Endothelial cell of umbilical vein (primary cell): ENCODE measurements at regions of chr1 and their contacts with region 1.

Region 1: DNA sequence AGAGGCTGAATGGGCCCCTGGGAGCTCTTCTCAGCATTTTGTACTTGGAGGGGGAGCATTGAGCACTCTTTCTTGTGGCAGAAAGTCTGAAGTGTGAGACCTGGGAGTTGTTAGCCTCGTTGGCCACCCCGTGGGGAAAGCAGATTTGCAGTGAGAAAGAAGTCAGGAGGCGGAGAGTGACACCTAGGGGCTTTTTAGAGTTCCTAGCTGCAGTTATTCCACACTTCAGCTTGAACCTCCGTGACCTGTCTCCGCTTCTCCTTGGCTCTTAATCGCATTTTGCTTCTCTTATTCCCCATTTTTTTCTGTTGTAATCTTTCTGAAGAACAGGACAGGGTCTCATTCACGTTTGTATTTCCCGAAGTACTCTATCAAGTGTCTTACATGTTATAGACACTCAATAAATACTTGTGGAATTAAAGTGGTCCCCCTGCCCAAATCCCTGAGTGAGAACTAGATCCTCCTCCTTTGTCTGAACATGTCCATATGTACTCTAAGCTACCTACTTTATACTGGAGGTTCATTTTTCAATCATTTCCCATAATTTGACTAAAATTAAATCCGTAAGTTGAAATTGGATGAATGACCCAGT is 14.5 kb upstream of the C1orf141 start:
- DNase-seq: peak; percentile 74
- H3K4me3 ChIP-seq: no peak overlapping the region
- H3K27ac ChIP-seq: no peak overlapping the region
- H3K4me1 ChIP-seq: no peaks in the 10 kb centered on the region
- H3K27me3 ChIP-seq: peaks cover 0 to 5% of the 10 kb centered on the region in 2 experiments
- CTCF ChIP-seq: peak; percentile 56 to 81
- POLR2A ChIP-seq: no peak

Region 2: GRCh38 chr1:66452162-66452561 is 697.1 kb before region 1 on chr1:
- CTCF ChIA-PET with region 1: no interaction called
- POLR2A ChIA-PET with region 1: no interaction called
- dilution Hi-C with region 1: no loop called
- intact Hi-C with region 1: loop called (anchors 10 kb)
- DNase-seq: peak; percentile 33
- H3K4me3 ChIP-seq: no peak overlapping the region
- H3K27ac ChIP-seq: no peak overlapping the region
- H3K4me1 ChIP-seq: no peaks in the 10 kb centered on the region
- H3K27me3 ChIP-seq: no peaks in the 10 kb centered on the region
- CTCF ChIP-seq: peak; percentile 22 to 25
- POLR2A ChIP-seq: no peak

Region 3: GRCh38 chr1:66890621-66891020 is 258.7 kb before region 1 on chr1:
- CTCF ChIA-PET with region 1: no interaction called
- POLR2A ChIA-PET with region 1: no interaction called
- dilution Hi-C with region 1: no loop called
- intact Hi-C with region 1: no loop called
- DNase-seq: no peak
- H3K4me3 ChIP-seq: no peak overlapping the region
- H3K27ac ChIP-seq: no peak overlapping the region
- H3K4me1 ChIP-seq: no peaks in the 10 kb centered on the region
- H3K27me3 ChIP-seq: no peaks in the 10 kb centered on the region
- CTCF ChIP-seq: no peak
- POLR2A ChIP-seq: no peak

Region 4: GRCh38 chr1:66981679-66982078 is 167.6 kb before region 1 on chr1:
- CTCF ChIA-PET with region 1: interaction called, 14 read pairs
- POLR2A ChIA-PET with region 1: no interaction called
- dilution Hi-C with region 1: no loop called
- intact Hi-C with region 1: no loop called
- DNase-seq: no peak
- H3K4me3 ChIP-seq: no peak overlapping the region
- H3K27ac ChIP-seq: no peak overlapping the region
- H3K4me1 ChIP-seq: no peaks in the 10 kb centered on the region
- H3K27me3 ChIP-seq: no peaks in the 10 kb centered on the region
- CTCF ChIP-seq: no peak
- POLR2A ChIP-seq: no peak

Region 5: GRCh38 chr1:67005068-67005467 is 144.2 kb before region 1 on chr1:
- CTCF ChIA-PET with region 1: interaction called, 40 read pairs
- POLR2A ChIA-PET with region 1: no interaction called
- dilution Hi-C with region 1: no loop called
- intact Hi-C with region 1: no loop called
- DNase-seq: no peak
- H3K4me3 ChIP-seq: no peak overlapping the region
- H3K27ac ChIP-seq: no peak overlapping the region
- H3K4me1 ChIP-seq: no peaks in the 10 kb centered on the region
- H3K27me3 ChIP-seq: no peaks in the 10 kb centered on the region
- CTCF ChIP-seq: no peak
- POLR2A ChIP-seq: no peak

Region 6: GRCh38 chr1:67053785-67054772 is 95.2 kb before region 1 on chr1 and contains the start of gene SLC35D1:
- CTCF ChIA-PET with region 1: interaction called, 18 read pairs
- POLR2A ChIA-PET with region 1: no interaction called
- dilution Hi-C with region 1: no loop called
- intact Hi-C with region 1: no loop called
- DNase-seq: peak; percentile 80
- H3K4me3 ChIP-seq: peak within 1 kb of the TSS; percentile 72 to 83 (median 81)
- H3K27ac ChIP-seq: peak within 1 kb of the TSS; percentile 74
- H3K4me1 ChIP-seq: peaks cover 13% of the 10 kb centered on the region
- H3K27me3 ChIP-seq: no peaks in the 10 kb centered on the region
- CTCF ChIP-seq: no peak
- POLR2A ChIP-seq: peak; percentile 81
- total RNA-seq, gene SLC35D1: 6.1 and 6.6 TPM in 2 replicates

Region 7: GRCh38 chr1:67134695-67135094 is 14.6 kb before region 1 on chr1 and contains the start of gene C1orf141:
- CTCF ChIA-PET with region 1: interaction called, 12 read pairs
- POLR2A ChIA-PET with region 1: no interaction called
- dilution Hi-C with region 1: no loop called
- intact Hi-C with region 1: no loop called
- DNase-seq: peak; percentile 7
- H3K4me3 ChIP-seq: peak within 1 kb of the TSS; percentile 20 to 50 (median 37)
- H3K27ac ChIP-seq: no peak within 1 kb of the TSS
- H3K4me1 ChIP-seq: peaks cover 6% of the 10 kb centered on the region
- H3K27me3 ChIP-seq: peaks cover 0 to 6% of the 10 kb centered on the region in 2 experiments
- CTCF ChIP-seq: no peak
- POLR2A ChIP-seq: no peak
- total RNA-seq, gene C1orf141: not detected in 2 replicates